Dorsolateral prefrontal cortex (tissue), 120 donors: ENCODE measurements at regions of chr15 and their contacts with region 1.

Region 1: GRCh38 chr15:32669896-32670619 is 28.5 kb downstream of the SCG5 start:
- DNase-seq: peak in 9 of 10 donors; percentile 59 to 87 (median 78)
- H3K4me3 ChIP-seq: peak overlapping the region in 40 of 59 donors; percentile 0 to 55 (median 22)
- H3K27ac ChIP-seq: peak overlapping the region in 58 of 59 donors; percentile 61 to 99 (median 94)
- H3K27me3 ChIP-seq: no peaks in the 10 kb centered on the region
- CTCF ChIP-seq: peak in 10 of 56 donors; percentile 5 to 21 (median 16)

Region 2: GRCh38 chr15:32717426-32718226 is 47.6 kb after region 1 on chr15 and contains the start of gene GREM1:
- intact Hi-C with region 1: loop called (anchors 2 to 5 kb)
- DNase-seq: peak in 4 of 10 donors; percentile 40 to 65 (median 50)
- H3K4me3 ChIP-seq: peak within 1 kb of the TSS; percentile 33 to 79 (median 63)
- H3K27ac ChIP-seq: peak within 1 kb of the TSS in 52 of 59 donors; percentile 10 to 89 (median 76)
- H3K27me3 ChIP-seq: peaks cover 0 to 68% (median 53%) of the 10 kb centered on the region in 45 donors
- CTCF ChIP-seq: no peak
- total RNA-seq, gene GREM1: 2.4 to 117 (median 17.9) TPM